Caco-2 (cell line): ENCODE measurements at regions of chr4 and their contacts with region 1.

Region 1: DNA sequence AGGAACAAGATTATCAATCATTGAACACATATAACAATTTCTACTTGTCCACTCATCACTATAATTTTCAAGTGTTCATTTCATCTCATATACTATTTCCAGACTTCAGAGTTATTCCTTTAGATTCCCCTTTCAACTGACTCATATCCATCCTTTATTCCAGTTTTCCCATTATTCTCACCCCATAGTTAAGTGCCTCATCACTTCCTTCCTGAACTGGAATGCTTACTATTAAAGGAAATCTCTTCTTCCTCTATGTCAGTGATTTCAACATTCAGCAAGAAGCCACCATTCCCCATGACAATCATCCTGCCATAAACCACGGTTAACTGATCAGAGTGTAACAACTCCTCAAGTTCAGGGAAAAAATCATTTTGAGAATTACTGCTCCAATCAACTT is 198.9 kb downstream of the FBXO8 start:
- DNase-seq: no peak
- H3K4me3 ChIP-seq: no peak overlapping the region
- H3K4me3 Mint-ChIP-seq: no peak overlapping the region
- H3K27ac Mint-ChIP-seq: no peak overlapping the region
- H3K4me1 ChIP-seq: peaks cover 8% of the 10 kb centered on the region
- H3K4me1 Mint-ChIP-seq: peaks cover 10% of the 10 kb centered on the region
- H3K27me3 ChIP-seq: no peaks in the 10 kb centered on the region
- H3K27me3 Mint-ChIP-seq: no peaks in the 10 kb centered on the region
- CTCF ChIP-seq: no peak

Region 2: DNA sequence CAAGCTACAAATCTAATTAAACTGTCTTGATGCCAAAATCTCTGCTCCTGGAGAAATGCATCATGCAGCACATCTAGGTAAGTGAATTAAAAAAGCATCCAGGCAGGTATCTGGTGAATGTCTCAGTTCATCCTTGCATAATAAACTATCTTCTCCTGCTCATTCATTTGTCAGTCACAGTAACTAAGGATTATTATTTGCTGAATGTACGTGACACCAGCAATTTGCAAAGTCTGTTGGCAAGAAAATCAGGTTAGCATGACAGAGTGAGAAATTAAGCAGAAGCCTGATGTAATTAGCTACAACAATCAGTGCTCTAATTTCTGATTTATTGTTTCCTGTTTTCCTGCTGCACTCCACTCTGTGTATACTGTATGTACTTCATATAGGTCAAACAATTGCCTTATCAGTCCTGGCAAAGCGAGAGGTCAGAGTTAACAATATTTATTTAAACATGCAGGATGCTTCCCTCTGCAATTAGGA is 14.7 kb before region 1 on chr4:
- CTCF ChIA-PET with region 1: no interaction called
- POLR2A ChIA-PET with region 1: no interaction called
- intact Hi-C with region 1: loop called (anchors 2 kb)
- DNase-seq: no peak
- H3K4me3 ChIP-seq: no peak overlapping the region
- H3K4me3 Mint-ChIP-seq: no peak overlapping the region
- H3K27ac Mint-ChIP-seq: no peak overlapping the region
- H3K4me1 ChIP-seq: peaks cover 9% of the 10 kb centered on the region
- H3K4me1 Mint-ChIP-seq: peaks cover 25% of the 10 kb centered on the region
- H3K27me3 ChIP-seq: no peaks in the 10 kb centered on the region
- H3K27me3 Mint-ChIP-seq: no peaks in the 10 kb centered on the region
- CTCF ChIP-seq: no peak